PC-3 (cell line): ENCODE measurements at regions of chr10 and their contacts with region 1.

Region 1: DNA sequence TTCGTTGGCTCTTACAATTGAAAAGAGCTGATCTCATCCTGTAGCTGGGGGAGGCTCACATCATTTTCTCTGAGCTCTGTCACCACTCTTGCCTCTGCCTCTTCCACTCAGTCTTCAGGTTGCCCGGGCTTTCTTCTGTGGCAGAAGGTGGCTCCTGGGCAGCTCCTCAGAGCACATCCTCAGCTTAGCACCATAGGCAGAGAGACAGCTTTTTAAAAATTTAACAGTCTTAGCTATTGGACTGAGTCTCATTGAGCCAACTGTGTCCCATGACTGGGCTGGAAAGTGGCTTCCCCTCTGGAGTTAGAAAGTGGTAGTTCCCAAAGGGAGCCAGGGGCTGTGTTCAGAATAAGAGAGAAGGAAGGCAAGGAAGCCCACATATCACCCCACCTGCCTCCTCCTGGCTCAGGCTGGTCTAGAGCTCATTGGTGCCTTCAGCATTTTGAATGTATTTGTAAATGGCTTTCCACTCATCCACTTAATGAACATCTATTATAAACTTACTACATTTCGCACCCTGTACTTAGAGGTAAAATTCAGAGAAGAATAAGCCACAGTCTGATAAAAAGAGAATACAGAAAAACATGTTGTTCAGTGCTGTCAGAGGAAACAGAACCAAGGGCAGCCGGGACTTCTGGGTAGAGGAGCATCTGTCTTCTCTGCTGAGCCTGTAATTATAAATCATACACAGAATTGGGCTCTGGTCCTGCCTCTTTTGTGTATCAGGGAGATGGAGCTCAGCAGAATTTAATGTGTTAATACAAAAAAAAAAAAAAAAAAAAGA is 119.3 kb downstream of the WDFY4 start:
- DNase-seq: no peak
- ATAC-seq: no peak
- H3K4me3 ChIP-seq: no peak overlapping the region
- H3K27ac ChIP-seq: no peak overlapping the region
- H3K4me1 ChIP-seq: no peaks in the 10 kb centered on the region
- H3K27me3 ChIP-seq: peaks cover 35% of the 10 kb centered on the region
- CTCF ChIP-seq: no peak

Region 2: GRCh38 chr10:48695636-48696534 is 108.1 kb before region 1 on chr10:
- CTCF ChIA-PET with region 1: interaction called, 10 read pairs
- POLR2A ChIA-PET with region 1: no interaction called
- intact Hi-C with region 1: no loop called
- DNase-seq: no peak
- ATAC-seq: no peak
- H3K4me3 ChIP-seq: no peak overlapping the region
- H3K27ac ChIP-seq: no peak overlapping the region
- H3K4me1 ChIP-seq: no peaks in the 10 kb centered on the region
- H3K27me3 ChIP-seq: peaks cover 88% of the 10 kb centered on the region
- CTCF ChIP-seq: no peak

Region 3: GRCh38 chr10:48759113-48759901 is 44.7 kb before region 1 on chr10:
- CTCF ChIA-PET with region 1: no interaction called
- POLR2A ChIA-PET with region 1: no interaction called
- intact Hi-C with region 1: no loop called
- DNase-seq: no peak
- ATAC-seq: no peak
- H3K4me3 ChIP-seq: no peak overlapping the region
- H3K27ac ChIP-seq: no peak overlapping the region
- H3K4me1 ChIP-seq: no peaks in the 10 kb centered on the region
- H3K27me3 ChIP-seq: peaks cover 75% of the 10 kb centered on the region
- CTCF ChIP-seq: no peak